Right ventricle myocardium superior (tissue), 1 donor: ENCODE measurements at regions of chr5 and their contacts with region 1.

Region 1: GRCh38 chr5:173972925-173973615 is 15.9 kb upstream of the C5orf47 start:
- DNase-seq: peak; percentile 82
- ATAC-seq: peak; percentile 91

Region 2: GRCh38 chr5:173615884-173616576 is 357.0 kb before region 1 on chr5:
- intact Hi-C with region 1: loop called (anchors 2 kb)
- DNase-seq: peak; percentile 64
- ATAC-seq: peak; percentile 74

Region 3: GRCh38 chr5:173764321-173765029 is 208.6 kb before region 1 on chr5:
- intact Hi-C with region 1: loop called (anchors 5 kb)
- DNase-seq: peak; percentile 82
- ATAC-seq: peak; percentile 18

Region 4: GRCh38 chr5:173887610-173888472 is 85.2 kb before region 1 on chr5 and contains the start of gene CPEB4:
- intact Hi-C with region 1: loop called (anchors 5 kb)
- DNase-seq: peak; percentile 99
- ATAC-seq: peak; percentile 94
- total RNA-seq, gene CPEB4: 118 TPM

Region 5: DNA sequence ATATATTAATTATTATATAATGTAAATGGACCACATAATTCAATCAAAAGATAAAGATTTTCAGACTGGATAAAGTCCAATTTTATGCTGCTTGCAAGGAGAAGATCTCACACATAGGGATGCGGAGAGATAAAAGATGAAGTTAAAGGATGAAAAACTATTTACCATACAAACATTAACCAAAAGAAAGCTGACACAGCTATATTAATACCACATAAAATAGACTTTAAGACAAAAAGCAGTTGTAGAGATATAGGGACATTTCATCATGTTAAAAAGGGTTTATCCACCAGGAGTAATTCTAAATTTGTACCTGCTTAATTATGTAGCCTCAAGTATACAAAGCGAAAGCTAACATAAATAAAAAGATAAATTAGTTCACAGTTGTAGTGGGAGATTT is 57.2 kb after region 1 on chr5:
- intact Hi-C with region 1: no loop called
- DNase-seq: no peak
- ATAC-seq: no peak